ENCODE measurements at regions of chrX and their contacts with region 1.

Region 1: DNA sequence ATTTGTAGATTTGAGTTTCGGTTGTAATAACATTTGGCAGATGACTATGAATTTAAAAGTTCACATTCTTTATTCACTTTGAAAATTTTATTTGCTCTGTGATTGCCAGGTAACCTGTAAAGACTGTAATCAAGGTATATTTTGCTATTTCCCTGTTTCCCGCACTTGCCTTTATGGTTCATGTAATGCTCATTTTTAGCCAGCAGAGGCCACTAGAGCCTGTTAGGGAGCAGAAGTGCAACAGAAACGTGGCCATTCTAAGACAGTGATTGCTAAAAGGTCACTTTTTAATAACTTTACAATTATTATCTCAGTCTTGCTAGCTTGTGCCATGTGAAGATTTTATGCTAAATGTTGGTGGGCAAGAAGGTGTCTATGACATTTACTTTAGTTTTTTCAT is 12.4 kb downstream of the YIPF6 start:
- DNase-seq: peak in 1 of 5 donors; percentile 30
- H3K4me3 ChIP-seq: no peak overlapping the region
- H3K27ac ChIP-seq: no peak overlapping the region
- H3K4me1 ChIP-seq: no peaks in the 10 kb centered on the region
- H3K27me3 ChIP-seq: peaks cover 1% of the 10 kb centered on the region
- CTCF ChIP-seq: peak; percentile 19 to 60 (median 45)
- EP300 ChIP-seq: no peak
- POLR2A ChIP-seq: no peak

Region 2: DNA sequence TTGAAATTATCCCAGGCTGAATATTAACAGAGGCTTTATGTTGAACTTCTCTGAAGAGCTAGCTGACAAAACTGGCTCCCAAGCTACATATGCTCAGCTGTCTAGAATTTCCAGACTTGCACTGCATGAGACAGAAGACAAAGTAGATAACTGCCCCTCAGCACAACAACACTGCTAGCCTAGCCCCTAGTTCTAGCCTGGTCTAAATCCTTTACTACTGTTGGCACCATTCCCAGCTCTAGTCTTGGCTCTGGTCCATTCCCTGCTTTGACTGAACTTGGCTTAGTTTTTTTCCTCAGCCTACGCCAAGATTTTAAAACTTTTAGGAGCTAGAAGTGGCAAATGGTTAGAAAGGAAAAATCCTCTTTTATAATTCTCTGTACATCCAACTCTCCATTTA is 70.3 kb before region 1 on chrX:
- intact Hi-C with region 1: no loop called
- DNase-seq: peak; percentile 76 to 89 (median 80)
- H3K4me3 ChIP-seq: no peak overlapping the region
- H3K27ac ChIP-seq: no peak overlapping the region
- H3K4me1 ChIP-seq: no peaks in the 10 kb centered on the region
- H3K27me3 ChIP-seq: no peaks in the 10 kb centered on the region
- CTCF ChIP-seq: no peak
- EP300 ChIP-seq: no peak
- POLR2A ChIP-seq: no peak

Region 3: GRCh38 chrX:68634654-68635232 is 123.5 kb after region 1 on chrX:
- intact Hi-C with region 1: no loop called
- DNase-seq: no peak
- H3K4me3 ChIP-seq: no peak overlapping the region
- H3K27ac ChIP-seq: no peak overlapping the region
- H3K4me1 ChIP-seq: no peaks in the 10 kb centered on the region
- H3K27me3 ChIP-seq: no peaks in the 10 kb centered on the region
- CTCF ChIP-seq: no peak
- EP300 ChIP-seq: no peak
- POLR2A ChIP-seq: no peak

Region 4: DNA sequence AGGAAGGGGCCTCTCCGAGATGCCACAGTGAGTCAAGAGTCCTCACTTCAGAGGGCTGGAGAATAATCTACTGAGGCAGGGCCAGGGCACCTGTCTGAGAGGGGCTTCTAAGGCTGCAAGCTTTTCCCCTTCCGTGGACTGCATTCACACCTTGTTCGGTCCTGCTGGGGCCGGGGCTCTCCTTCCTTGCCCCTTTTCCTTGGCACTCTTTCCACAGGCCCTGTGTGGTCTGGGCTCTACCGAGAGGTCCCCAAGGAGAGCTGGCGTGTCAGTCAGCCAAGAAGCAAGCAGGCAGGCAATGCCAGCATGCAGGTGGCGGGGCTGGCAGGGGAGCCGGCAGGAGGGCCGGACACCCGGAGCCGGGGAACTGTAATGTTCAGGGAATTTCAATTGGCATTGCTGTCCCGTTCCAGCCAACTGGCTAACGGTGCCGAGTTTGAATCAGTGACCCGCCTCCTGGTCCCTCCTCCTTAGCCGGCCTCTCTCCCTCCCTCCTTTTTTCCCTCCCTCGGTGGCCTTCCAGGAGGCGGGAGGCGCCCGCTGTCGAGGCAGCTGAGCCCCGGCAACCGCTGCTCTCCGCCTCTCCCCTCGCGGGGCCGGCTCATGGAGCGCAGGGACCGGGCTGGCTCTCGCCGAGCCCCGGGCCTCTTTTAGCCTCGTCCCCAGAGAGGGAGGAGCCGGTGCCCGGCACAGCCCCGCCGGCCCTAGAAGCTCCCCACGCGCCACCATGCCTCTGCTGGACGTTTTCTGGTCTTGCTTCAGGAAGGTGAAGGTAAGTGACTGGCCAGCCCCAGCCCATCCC is 136.1 kb after region 1 on chrX and contains the start of gene STARD8:
- intact Hi-C with region 1: no loop called
- DNase-seq: peak in 4 of 5 donors; percentile 14 to 41 (median 31)
- H3K4me3 ChIP-seq: peak within 1 kb of the TSS; percentile 25
- H3K27ac ChIP-seq: no peak within 1 kb of the TSS
- H3K4me1 ChIP-seq: peaks cover 2% of the 10 kb centered on the region
- H3K27me3 ChIP-seq: no peaks in the 10 kb centered on the region
- CTCF ChIP-seq: no peak
- EP300 ChIP-seq: no peak
- POLR2A ChIP-seq: no peak
- total RNA-seq, gene STARD8: 2.3 to 7.8 (median 6.2) TPM

Region 5: GRCh38 chrX:68710870-68711576 is 199.8 kb after region 1 on chrX:
- intact Hi-C with region 1: loop called in 2 of 4 experiments (anchors 5 to 10 kb)
- DNase-seq: peak in 3 of 5 donors; percentile 27 to 50 (median 31)
- H3K4me3 ChIP-seq: no peak overlapping the region
- H3K27ac ChIP-seq: no peak overlapping the region
- H3K4me1 ChIP-seq: no peaks in the 10 kb centered on the region
- H3K27me3 ChIP-seq: no peaks in the 10 kb centered on the region
- CTCF ChIP-seq: peak in 2 of 3 donors; percentile 42 to 50
- EP300 ChIP-seq: no peak
- POLR2A ChIP-seq: no peak

Region 6: GRCh38 chrX:68719904-68720614 is 208.8 kb after region 1 on chrX:
- intact Hi-C with region 1: loop called in 2 of 4 experiments (anchors 5 to 10 kb)
- DNase-seq: peak in 1 of 5 donors; percentile 6
- H3K4me3 ChIP-seq: no peak overlapping the region
- H3K27ac ChIP-seq: no peak overlapping the region
- H3K4me1 ChIP-seq: no peaks in the 10 kb centered on the region
- H3K27me3 ChIP-seq: no peaks in the 10 kb centered on the region
- CTCF ChIP-seq: no peak
- EP300 ChIP-seq: no peak
- POLR2A ChIP-seq: no peak

Measured in ovary (tissue), 10 donors.